ENCODE measurements at regions of chr4 and their contacts with region 1.

Region 1: DNA sequence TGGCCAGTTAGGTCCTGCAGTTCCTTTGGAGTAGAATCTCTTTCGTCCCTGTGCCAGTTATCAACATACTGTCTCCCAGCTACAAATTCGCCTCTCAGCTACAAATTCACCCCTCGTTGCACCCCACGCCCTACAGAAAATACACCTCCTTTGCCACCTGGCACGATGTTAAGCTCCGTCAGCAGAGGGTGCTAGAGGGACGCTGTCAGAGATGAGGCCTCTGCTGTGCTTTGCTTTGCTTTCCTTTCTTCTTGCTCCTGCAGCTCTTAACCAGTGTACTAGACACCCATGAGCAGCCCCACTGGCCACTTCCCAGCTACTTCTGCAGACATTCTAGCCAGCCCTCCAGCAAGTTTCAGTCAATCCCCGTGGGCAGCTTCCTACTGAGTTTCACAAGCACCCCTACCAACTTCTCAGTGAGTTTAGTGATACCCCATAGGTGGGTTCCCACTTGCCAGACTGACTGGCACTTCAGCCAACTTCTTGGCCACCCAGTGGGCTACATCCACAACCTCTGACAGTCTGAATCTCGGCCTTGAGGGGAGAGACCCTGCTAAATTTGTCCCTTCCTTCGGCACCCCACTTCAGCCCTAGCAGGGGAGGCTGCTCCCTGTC is 21.8 kb downstream of the HAUS3 start:
- DNase-seq: no peak
- H3K4me3 ChIP-seq: no peak overlapping the region
- CTCF ChIP-seq: peak; percentile 89

Region 2: GRCh38 chr4:2101346-2102044 is 118.6 kb before region 1 on chr4:
- CTCF ChIA-PET with region 1: no interaction called
- POLR2A ChIA-PET with region 1: no interaction called
- DNase-seq: no peak
- H3K4me3 ChIP-seq: no peak overlapping the region
- CTCF ChIP-seq: no peak

Region 3: DNA sequence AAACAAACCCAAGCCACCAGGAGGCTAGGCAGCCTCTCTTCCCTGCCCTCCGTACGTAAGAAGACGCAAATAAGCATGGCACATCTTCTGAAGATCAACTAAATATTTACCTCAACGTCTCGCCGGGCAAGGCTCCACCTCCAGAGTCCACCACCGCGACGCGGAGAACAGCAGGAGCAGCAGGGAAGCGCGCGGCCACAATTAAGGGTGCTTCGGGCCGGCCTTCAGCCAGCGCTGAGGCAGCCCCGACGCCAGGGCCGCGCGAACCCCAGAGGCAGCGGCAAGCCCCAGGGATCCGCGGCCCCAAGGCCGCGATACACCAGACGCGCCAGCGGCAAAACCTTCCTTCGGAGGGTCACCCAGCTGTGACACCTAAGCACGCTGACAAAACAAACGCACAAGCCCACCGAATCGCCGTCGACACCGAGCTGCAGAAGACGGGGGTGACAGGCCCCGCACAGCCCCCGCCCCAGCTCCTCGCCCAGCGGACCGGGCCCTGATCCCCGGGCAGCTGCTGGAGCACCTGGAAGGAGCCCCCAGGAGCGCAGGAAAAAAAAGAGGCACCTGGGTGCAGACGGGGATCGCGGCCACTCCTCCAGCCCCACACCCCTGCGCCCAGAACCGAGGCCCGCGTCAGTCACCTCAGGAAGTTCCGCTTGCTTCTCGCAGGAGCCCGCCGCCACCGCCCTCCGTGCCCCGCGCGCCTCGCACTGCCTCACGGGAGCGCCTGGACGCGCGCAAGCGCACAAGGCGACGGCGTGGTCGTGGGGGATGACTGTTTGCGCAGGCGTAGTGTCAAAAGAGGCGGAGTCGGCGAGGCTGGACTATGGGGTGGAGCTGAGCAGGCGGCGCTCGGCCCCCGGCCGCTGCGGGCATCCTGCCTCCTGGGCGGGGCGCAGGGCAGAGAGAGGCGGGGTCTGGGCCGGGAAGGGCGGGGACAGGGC is 21.6 kb after region 1 on chr4 and contains the starts of genes HAUS3 and POLN:
- CTCF ChIA-PET with region 1: interaction called, 42 read pairs
- POLR2A ChIA-PET with region 1: no interaction called
- DNase-seq: peak; percentile 59
- H3K4me3 ChIP-seq: peak within 1 kb of the TSS; percentile 95
- CTCF ChIP-seq: no peak

Region 4: DNA sequence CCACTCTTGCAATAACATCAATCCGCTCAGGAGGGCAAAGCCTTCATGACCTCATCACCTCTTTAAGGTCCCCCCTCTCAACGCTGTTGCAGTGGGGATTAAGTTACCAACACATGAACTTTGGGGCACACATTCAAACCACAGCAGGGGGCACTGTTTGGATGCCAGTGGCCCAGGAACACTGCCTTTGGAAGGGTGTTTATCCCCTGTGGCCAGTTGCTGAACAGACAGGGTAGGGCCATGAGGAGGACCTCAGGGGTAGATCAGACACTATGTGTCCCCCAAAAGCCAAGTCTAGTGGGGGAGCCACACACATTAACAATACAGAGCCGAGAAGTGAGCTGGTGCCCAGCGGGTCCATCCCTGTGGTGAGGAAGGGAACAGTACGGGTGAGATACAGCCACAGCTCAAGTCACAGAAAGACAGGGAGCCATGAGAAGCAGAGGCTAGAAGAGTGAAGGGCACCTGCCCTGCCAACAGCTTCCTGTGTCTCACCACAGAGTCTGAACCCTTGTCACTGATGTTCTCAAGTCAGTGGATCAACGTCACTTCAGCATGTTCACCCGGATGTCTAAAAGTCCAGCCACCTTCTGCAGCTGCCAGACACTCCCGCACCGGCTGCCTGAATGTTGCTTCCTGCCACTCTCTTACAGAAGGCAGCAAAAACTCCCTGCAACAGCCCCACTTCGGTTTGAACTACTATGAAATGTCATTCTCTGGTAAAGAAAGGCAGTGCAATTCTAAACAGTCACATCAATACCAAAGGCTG is 61.6 kb after region 1 on chr4:
- CTCF ChIA-PET with region 1: no interaction called
- POLR2A ChIA-PET with region 1: no interaction called
- DNase-seq: no peak
- H3K4me3 ChIP-seq: no peak overlapping the region
- CTCF ChIP-seq: no peak

Region 5: GRCh38 chr4:2436301-2436700 is 216.2 kb after region 1 on chr4:
- CTCF ChIA-PET with region 1: interaction called, 55 read pairs
- POLR2A ChIA-PET with region 1: no interaction called
- DNase-seq: no peak
- H3K4me3 ChIP-seq: no peak overlapping the region
- CTCF ChIP-seq: peak; percentile 38

Region 6: DNA sequence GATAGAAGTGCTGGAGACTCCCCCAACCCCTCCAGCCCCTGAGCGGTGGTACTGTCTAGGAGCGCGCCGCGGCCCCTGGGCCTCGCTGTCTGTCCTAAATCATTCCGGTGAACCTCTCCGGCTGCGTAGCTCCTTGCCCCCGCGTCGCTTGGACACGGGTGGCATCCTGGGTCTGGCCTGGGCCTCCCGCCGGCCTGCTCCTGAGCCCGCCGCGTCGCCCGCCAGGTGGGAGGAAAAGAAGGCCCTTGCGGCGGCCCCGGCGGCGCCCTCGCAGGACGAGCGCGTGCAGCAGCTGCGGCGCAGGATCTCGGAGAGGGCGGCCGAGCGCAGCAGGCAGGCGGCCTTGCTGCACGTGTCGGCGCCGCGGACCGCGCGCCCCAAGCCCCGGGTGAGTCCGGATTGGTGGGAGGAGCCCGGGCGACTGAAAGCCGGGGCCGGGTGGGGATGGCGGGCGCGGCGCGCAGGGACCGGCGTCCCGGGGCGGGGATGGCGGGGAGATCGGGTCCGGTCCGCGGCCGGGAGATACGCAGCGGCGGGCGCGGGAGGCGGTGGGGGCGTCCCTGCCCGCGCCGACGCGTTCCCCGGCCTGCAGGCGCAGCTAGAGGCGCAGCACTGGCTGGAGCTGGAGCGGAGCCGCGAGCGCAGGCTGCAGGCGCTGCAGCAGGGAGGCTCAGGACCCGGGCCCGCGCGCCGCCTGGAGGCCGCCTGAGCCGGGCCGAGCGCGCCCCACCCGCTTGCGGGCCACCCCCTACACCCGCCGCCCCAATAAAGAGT is 242.3 kb after region 1 on chr4:
- CTCF ChIA-PET with region 1: interaction called, 45 read pairs
- POLR2A ChIA-PET with region 1: interaction called, 3 read pairs
- DNase-seq: no peak
- H3K4me3 ChIP-seq: peak overlapping the region; percentile 47
- CTCF ChIP-seq: peak; percentile 43